ENCODE measurements at regions of chr6 and their contacts with region 1.

Region 1: GRCh38 chr6:136846046-136846445 is 23.7 kb downstream of the PEX7 start:
- DNase-seq: no peak
- H3K4me3 ChIP-seq: no peak overlapping the region
- H3K27ac ChIP-seq: no peak overlapping the region
- H3K4me1 ChIP-seq: no peaks in the 10 kb centered on the region
- H3K27me3 ChIP-seq: no peaks in the 10 kb centered on the region
- CTCF ChIP-seq: peak in 2 of 3 experiments; percentile 49 to 63; a peak in 2 of 4 replicates
- EP300 ChIP-seq: no peak
- POLR2A ChIP-seq: no peak
- RAD21 ChIP-seq: peak; percentile 73 to 76

Region 2: GRCh38 chr6:136783495-136784270 is 62.4 kb before region 1 on chr6:
- CTCF ChIA-PET with region 1: no interaction called
- POLR2A ChIA-PET with region 1: no interaction called
- DNase-seq: no peak
- H3K4me3 ChIP-seq: no peak overlapping the region
- H3K27ac ChIP-seq: no peak overlapping the region
- H3K4me1 ChIP-seq: peaks cover 0 to 4% (median 1%) of the 10 kb centered on the region in 4 experiments; a peak in 2 of 7 replicates
- H3K27me3 ChIP-seq: no peaks in the 10 kb centered on the region
- CTCF ChIP-seq: no peak
- EP300 ChIP-seq: no peak
- POLR2A ChIP-seq: no peak
- RAD21 ChIP-seq: no peak

Region 3: DNA sequence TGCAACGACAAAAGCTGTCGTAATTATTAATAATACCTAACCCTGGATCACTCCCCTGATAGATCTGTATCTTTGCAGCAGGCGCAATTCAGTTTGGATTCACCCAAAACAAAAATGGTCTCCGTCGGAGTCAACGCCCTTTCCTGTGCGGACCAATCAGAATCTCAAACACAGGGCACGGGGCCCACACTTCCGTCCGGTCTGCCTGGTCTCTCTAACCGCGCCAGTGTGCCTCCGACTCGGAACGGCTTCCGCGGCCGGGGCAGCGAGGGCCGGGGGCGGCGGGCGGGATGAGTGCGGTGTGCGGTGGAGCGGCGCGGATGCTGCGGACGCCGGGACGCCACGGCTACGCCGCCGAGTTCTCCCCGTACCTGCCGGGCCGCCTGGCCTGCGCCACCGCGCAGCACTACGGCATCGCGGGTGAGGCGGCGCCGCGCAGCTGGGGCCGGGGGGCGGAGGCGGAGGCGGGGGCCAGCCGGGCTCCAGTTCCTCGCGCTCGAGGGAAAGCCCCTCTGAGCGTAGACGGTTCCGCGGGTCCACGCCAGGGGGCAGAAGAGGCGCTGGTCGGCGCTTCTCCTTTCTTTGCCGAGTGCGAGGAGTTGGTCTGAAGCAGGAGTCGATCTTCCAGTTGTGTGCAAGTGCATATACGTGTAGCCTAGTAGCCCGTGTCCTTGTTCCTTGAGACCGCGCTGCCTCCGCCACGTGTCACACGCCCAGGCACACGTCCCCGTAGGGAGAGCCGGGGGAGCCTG is 23.5 kb before region 1 on chr6 and contains the start of gene PEX7:
- CTCF ChIA-PET with region 1: interaction called, 12 read pairs
- POLR2A ChIA-PET with region 1: interaction called, 5 read pairs
- DNase-seq: peak; percentile 69 to 93
- H3K4me3 ChIP-seq: peak within 1 kb of the TSS; percentile 56 to 81 (median 60)
- H3K27ac ChIP-seq: peak within 1 kb of the TSS; percentile 84
- H3K4me1 ChIP-seq: peaks cover 0 to 7% (median 3%) of the 10 kb centered on the region in 4 experiments; a peak in 3 of 7 replicates
- H3K27me3 ChIP-seq: no peaks in the 10 kb centered on the region; a peak in 2 of 7 replicates
- CTCF ChIP-seq: peak; percentile 67 to 81 (median 69)
- EP300 ChIP-seq: no peak
- POLR2A ChIP-seq: peak in 1 of 2 experiments; percentile 81; a peak in 2 of 3 replicates
- RAD21 ChIP-seq: peak; percentile 41 to 59; a peak in 3 of 4 replicates
- total RNA-seq, gene PEX7: 6.4 and 6.7 TPM in 2 replicates

Region 4: GRCh38 chr6:136859430-136859829 is 13.4 kb after region 1 on chr6:
- CTCF ChIA-PET with region 1: interaction called, 27 read pairs
- POLR2A ChIA-PET with region 1: interaction called, 3 read pairs
- DNase-seq: no peak
- H3K4me3 ChIP-seq: no peak overlapping the region
- H3K27ac ChIP-seq: no peak overlapping the region
- H3K4me1 ChIP-seq: no peaks in the 10 kb centered on the region
- H3K27me3 ChIP-seq: no peaks in the 10 kb centered on the region
- CTCF ChIP-seq: no peak
- EP300 ChIP-seq: no peak
- POLR2A ChIP-seq: no peak
- RAD21 ChIP-seq: no peak

Region 5: DNA sequence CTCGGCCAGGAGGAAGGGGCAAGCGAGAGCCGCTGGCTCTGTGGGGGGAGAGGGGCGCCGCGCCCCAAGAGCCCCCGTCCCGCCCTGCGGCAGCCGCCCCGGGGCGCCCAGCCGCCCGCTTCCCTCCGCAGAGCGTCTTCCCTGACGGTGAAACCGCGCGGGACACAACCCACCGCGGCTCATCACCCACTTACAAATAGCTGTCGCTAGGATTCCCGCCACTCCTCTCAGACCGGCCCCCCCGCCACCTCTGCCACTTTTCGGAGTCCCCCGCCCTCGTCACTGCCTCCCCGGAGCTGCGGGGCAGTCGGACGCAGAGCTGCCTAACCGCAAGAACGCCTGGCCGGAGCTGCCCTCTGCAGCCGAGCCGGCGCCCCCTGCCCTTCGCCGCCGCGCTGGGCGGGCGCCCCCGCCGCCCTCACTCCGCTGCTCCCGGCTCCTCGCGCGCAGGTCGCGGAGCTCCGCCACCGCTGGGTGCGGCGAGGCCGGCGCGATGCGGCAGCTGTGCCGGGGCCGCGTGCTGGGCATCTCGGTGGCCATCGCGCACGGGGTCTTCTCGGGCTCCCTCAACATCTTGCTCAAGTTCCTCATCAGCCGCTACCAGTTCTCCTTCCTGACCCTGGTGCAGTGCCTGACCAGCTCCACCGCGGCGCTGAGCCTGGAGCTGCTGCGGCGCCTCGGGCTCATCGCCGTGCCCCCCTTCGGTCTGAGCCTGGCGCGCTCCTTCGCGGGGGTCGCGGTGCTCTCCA is 76.1 kb after region 1 on chr6 and contains the start of gene SLC35D3:
- CTCF ChIA-PET with region 1: interaction called, 36 read pairs
- POLR2A ChIA-PET with region 1: no interaction called
- DNase-seq: peak in 1 of 2 experiments; percentile 73
- H3K4me3 ChIP-seq: peak within 1 kb of the TSS; percentile 37 to 60 (median 48)
- H3K27ac ChIP-seq: no peak within 1 kb of the TSS
- H3K4me1 ChIP-seq: peaks cover 0 to 12% (median 10%) of the 10 kb centered on the region in 4 experiments; a peak in 5 of 7 replicates
- H3K27me3 ChIP-seq: peaks cover 30 to 53% (median 52%) of the 10 kb centered on the region in 4 experiments
- CTCF ChIP-seq: no peak
- EP300 ChIP-seq: no peak
- POLR2A ChIP-seq: no peak
- RAD21 ChIP-seq: no peak
- total RNA-seq, gene SLC35D3: 0.39 and 0.57 TPM in 2 replicates

Region 6: DNA sequence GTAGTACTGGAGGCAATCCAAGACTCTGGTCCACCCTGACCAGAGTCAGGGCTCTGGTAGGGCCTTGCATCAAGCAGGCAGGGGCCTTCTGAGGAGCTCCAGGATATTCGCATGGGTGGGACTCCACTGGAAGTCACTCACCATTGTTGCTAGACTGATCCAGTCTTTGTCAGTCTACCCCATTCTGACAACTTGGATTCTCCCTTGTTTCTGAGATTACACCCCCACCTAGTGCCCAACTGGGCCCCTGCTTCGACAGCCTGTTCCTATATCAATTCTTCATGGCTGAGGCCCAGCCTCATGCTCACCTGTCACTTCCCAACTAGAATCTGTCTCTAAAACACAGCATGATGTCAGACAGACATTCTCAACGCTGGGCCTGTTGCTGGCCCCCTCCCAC is 81.2 kb after region 1 on chr6:
- CTCF ChIA-PET with region 1: interaction called, 36 read pairs
- POLR2A ChIA-PET with region 1: no interaction called
- DNase-seq: peak in 1 of 2 experiments; percentile 57
- H3K4me3 ChIP-seq: no peak overlapping the region
- H3K27ac ChIP-seq: no peak overlapping the region
- H3K4me1 ChIP-seq: peaks cover 0 to 11% (median 3%) of the 10 kb centered on the region in 4 experiments; a peak in 6 of 7 replicates
- H3K27me3 ChIP-seq: peaks cover 12 to 24% (median 21%) of the 10 kb centered on the region in 4 experiments
- CTCF ChIP-seq: peak; percentile 44 to 71 (median 69)
- EP300 ChIP-seq: no peak
- POLR2A ChIP-seq: no peak
- RAD21 ChIP-seq: peak; percentile 81 to 87

Measured in H1 (cell line).